ENCODE measurements at regions of chr16 and their contacts with region 1.

Region 1: GRCh38 chr16:81521151-81521626 is 76.6 kb downstream of the CMIP start:
- DNase-seq: peak; percentile 34 to 79 (median 65)
- ATAC-seq: peak; percentile 70
- H3K4me3 ChIP-seq: no peak overlapping the region
- H3K4me3 Mint-ChIP-seq: peak overlapping the region in 1 of 10 donors; percentile 48
- H3K27ac ChIP-seq: no peak overlapping the region
- H3K27ac Mint-ChIP-seq: peak overlapping the region; percentile 43 to 90 (median 68)
- H3K4me1 ChIP-seq: peaks cover 7 to 52% of the 10 kb centered on the region in 2 donors
- H3K4me1 Mint-ChIP-seq: peaks cover 14 to 61% (median 25%) of the 10 kb centered on the region in 7 donors
- H3K27me3 ChIP-seq: no peaks in the 10 kb centered on the region
- H3K27me3 Mint-ChIP-seq: no peaks in the 10 kb centered on the region

Region 2: DNA sequence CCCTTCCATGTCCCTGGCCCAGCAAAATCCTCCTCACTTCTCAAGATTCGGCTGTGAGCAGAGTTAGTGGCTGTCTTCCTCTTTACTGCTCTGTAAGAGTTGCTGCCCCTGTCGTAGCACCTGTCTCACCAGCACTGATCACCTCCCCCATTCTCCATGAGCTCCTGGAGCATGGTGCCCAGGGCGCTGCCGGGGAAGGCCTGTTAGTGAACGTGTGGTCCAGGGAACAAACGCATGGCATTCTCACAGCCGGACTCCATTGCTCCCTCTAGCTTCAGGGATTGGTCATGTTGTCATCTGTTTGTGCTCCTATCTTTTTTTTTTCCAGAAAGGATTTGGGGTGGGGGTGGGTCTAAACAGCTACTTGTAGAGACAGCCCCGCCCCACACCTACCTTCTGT is 64.6 kb after region 1 on chr16:
- CTCF ChIA-PET with region 1: no interaction called
- POLR2A ChIA-PET with region 1: no interaction called
- intact Hi-C with region 1: loop called in 1 of 2 experiments (anchors 1 kb)
- DNase-seq: no peak
- ATAC-seq: no peak
- H3K4me3 ChIP-seq: no peak overlapping the region
- H3K4me3 Mint-ChIP-seq: no peak overlapping the region
- H3K27ac ChIP-seq: no peak overlapping the region
- H3K27ac Mint-ChIP-seq: no peak overlapping the region
- H3K4me1 ChIP-seq: no peaks in the 10 kb centered on the region
- H3K4me1 Mint-ChIP-seq: peaks cover 3 to 45% (median 20%) of the 10 kb centered on the region in 7 donors
- H3K27me3 ChIP-seq: no peaks in the 10 kb centered on the region
- H3K27me3 Mint-ChIP-seq: no peaks in the 10 kb centered on the region

Region 3: DNA sequence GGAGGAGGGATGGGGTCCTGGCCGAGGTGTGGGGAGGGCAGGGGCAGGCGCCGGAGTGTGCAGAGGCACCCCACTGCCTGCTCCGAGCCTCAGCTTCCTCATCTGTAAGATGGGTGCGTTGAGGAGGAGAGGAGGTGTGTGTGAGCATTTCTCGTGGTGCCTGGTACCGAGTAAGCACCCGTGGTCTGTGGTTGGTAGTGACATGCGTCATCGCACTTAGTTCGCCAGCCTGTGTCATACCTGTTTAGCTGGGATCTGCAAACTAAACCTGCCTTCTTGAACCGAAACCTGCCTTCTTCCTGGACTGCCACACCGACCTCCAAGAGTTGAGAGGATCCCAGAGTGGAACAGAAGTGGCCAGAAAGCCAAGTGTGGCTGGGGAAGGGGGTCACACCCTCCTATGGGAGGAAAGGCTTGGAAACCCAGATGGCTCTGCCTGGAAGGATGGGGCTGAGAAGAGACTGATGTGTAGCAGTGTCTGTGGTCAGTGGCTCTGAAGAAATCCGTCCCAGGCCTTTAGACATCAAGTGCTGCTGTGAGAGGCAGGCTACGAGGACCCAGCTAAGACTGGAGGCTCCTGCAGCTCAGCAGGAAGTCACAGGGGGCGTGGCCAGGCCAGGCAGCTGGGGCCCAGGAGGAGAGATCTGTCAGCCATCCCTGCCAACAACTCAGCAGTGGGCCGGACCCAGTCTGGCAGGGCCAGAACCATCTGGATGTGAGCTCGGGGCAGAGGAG is 95.3 kb after region 1 on chr16:
- CTCF ChIA-PET with region 1: no interaction called
- POLR2A ChIA-PET with region 1: no interaction called
- intact Hi-C with region 1: loop called in 1 of 2 experiments (anchors 2 kb)
- DNase-seq: peak; percentile 44 to 64 (median 56)
- ATAC-seq: peak; percentile 92
- H3K4me3 ChIP-seq: peak overlapping the region; percentile 34
- H3K4me3 Mint-ChIP-seq: peak overlapping the region in 9 of 10 donors; percentile 26 to 64 (median 50)
- H3K27ac ChIP-seq: peak overlapping the region; percentile 70
- H3K27ac Mint-ChIP-seq: peak overlapping the region in 5 of 9 donors; percentile 78 to 93 (median 88)
- H3K4me1 ChIP-seq: peaks cover 22% of the 10 kb centered on the region in 2 donors
- H3K4me1 Mint-ChIP-seq: peaks cover 0 to 12% (median 10%) of the 10 kb centered on the region in 7 donors
- H3K27me3 ChIP-seq: no peaks in the 10 kb centered on the region
- H3K27me3 Mint-ChIP-seq: no peaks in the 10 kb centered on the region

Region 4: GRCh38 chr16:81715358-81716196 is 194.4 kb after region 1 on chr16:
- CTCF ChIA-PET with region 1: no interaction called
- POLR2A ChIA-PET with region 1: no interaction called
- intact Hi-C with region 1: loop called in 1 of 2 experiments (anchors 5 kb)
- DNase-seq: peak in 7 of 9 donors; percentile 47 to 70 (median 68)
- ATAC-seq: peak; percentile 73
- H3K4me3 ChIP-seq: peak overlapping the region; percentile 7
- H3K4me3 Mint-ChIP-seq: peak overlapping the region; percentile 53 to 83 (median 75)
- H3K27ac ChIP-seq: no peak overlapping the region
- H3K27ac Mint-ChIP-seq: peak overlapping the region; percentile 66 to 96 (median 88)
- H3K4me1 ChIP-seq: peaks cover 25 to 35% of the 10 kb centered on the region in 2 donors
- H3K4me1 Mint-ChIP-seq: peaks cover 35 to 54% (median 43%) of the 10 kb centered on the region in 7 donors
- H3K27me3 ChIP-seq: no peaks in the 10 kb centered on the region
- H3K27me3 Mint-ChIP-seq: no peaks in the 10 kb centered on the region

Region 5: GRCh38 chr16:81767987-81768592 is 246.9 kb after region 1 on chr16:
- CTCF ChIA-PET with region 1: no interaction called
- POLR2A ChIA-PET with region 1: no interaction called
- intact Hi-C with region 1: no loop called
- DNase-seq: no peak
- ATAC-seq: no peak
- H3K4me3 ChIP-seq: no peak overlapping the region
- H3K4me3 Mint-ChIP-seq: no peak overlapping the region
- H3K27ac ChIP-seq: no peak overlapping the region
- H3K27ac Mint-ChIP-seq: no peak overlapping the region
- H3K4me1 ChIP-seq: no peaks in the 10 kb centered on the region
- H3K4me1 Mint-ChIP-seq: no peaks in the 10 kb centered on the region
- H3K27me3 ChIP-seq: no peaks in the 10 kb centered on the region
- H3K27me3 Mint-ChIP-seq: peaks cover 0 to 12% (median 5%) of the 10 kb centered on the region in 5 donors